Activated CD4-positive, alpha-beta T cell treated with anti-CD3 and anti-CD28 coated beads, Interleukin-2, amount 10 ng/mL, durations not matched to agents 24 days and 14 days (primary cell): ENCODE measurements at regions of chr11 and their contacts with region 1.

Region 1: DNA sequence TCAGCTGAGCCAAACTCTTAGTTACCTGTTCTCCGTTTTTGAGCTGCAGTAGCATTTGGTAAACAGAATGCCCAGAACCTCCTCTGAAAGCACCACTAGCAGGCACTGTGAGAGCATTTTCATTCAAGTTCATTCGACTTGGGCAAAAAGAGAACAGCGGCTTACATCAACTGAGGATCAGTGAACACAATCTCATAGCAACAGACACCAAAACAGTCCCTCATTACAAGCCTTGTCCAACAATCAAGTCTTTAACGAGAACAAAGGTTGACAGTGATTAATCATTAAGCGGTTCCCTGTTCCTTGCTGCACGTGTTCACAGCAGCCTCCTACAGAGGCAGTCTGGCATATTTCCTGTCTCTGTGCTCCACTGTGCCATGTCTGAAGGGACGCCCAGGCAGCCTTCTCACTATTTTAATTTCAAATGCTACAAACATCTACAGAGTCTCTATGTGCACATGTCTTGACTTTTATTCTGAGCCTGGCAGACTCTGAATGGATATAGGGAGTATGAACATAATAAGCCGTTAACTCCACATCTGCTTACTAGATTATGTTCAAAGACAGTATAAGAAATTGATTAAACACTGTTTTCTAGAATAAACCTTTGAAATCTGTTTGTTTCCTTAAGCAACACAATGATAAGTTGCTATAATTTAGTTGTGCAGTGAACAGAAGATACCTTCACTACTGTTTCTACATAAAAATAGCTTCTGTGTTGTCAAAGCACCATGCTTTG is 88.3 kb upstream of the MTMR2 start:
- DNase-seq: peak; percentile 82
- H3K4me3 Mint-ChIP-seq: peak overlapping the region; percentile 52
- H3K27ac Mint-ChIP-seq: peak overlapping the region; percentile 79
- H3K4me1 Mint-ChIP-seq: peaks cover 49% of the 10 kb centered on the region
- H3K27me3 Mint-ChIP-seq: no peaks in the 10 kb centered on the region

Region 2: GRCh38 chr11:95790123-95790932 is 221.9 kb before region 1 on chr11 and contains the start of gene CEP57:
- intact Hi-C with region 1: loop called (anchors 2 kb)
- DNase-seq: peak; percentile 98
- H3K4me3 Mint-ChIP-seq: peak within 1 kb of the TSS; percentile 98
- H3K27ac Mint-ChIP-seq: peak within 1 kb of the TSS; percentile 100
- H3K4me1 Mint-ChIP-seq: peaks cover 45% of the 10 kb centered on the region
- H3K27me3 Mint-ChIP-seq: no peaks in the 10 kb centered on the region
- total RNA-seq, gene CEP57: 75.7 and 87.6 TPM in 2 replicates

Region 3: GRCh38 chr11:96054870-96055705 is 42.8 kb after region 1 on chr11:
- intact Hi-C with region 1: loop called (anchors 2 kb)
- DNase-seq: no peak
- H3K4me3 Mint-ChIP-seq: no peak overlapping the region
- H3K27ac Mint-ChIP-seq: peak overlapping the region; percentile 51
- H3K4me1 Mint-ChIP-seq: peaks cover 35% of the 10 kb centered on the region
- H3K27me3 Mint-ChIP-seq: no peaks in the 10 kb centered on the region

Region 4: GRCh38 chr11:96075532-96075959 is 63.3 kb after region 1 on chr11:
- intact Hi-C with region 1: loop called (anchors 1 kb)
- DNase-seq: no peak
- H3K4me3 Mint-ChIP-seq: peak overlapping the region; percentile 47
- H3K27ac Mint-ChIP-seq: peak overlapping the region; percentile 58
- H3K4me1 Mint-ChIP-seq: peaks cover 51% of the 10 kb centered on the region
- H3K27me3 Mint-ChIP-seq: no peaks in the 10 kb centered on the region

Region 5: DNA sequence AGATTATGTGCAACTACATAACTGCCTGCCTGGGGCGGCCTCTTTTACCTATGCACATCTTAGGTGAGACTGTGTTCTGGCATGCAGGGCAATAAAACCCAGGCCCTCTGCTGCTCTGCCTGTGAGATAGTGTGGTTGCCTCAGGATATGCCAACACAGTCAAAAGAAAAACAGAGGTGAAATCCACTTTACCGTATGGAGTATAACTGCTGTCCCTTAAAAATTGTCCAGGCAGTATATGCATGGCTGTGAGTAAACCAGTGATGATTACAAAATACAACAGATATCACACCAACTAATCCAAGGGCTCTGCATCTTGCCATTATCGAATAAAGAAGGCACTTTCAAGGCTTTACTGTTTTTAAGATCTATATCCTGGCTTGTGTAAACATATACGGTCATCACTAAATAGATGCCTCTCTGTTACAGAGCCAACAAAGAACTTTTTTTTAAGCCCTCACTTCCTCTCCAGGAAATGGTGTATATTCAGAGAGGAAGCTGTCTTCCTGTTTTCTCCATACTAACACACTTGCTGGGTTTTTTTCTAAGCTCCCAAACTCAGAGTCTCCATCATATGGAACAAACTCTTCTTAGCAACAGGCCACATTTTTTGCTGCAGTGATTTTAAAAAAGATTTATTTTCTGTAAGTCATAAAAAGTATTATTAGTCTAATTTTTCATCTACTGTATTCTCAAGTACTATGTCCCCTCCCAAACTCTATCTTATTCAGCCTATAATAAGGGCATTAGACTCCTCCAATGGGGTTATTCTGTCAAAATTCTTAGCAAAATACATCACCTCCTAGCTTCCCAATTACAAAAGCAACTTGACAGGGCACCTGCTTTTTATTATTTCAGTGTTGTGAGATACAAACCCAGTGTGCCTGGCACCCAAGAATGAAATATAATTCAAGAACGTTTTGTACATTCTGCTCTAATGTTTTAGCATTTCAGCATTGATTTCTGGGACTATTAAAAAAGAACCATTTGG is 195.5 kb after region 1 on chr11:
- intact Hi-C with region 1: loop called (anchors 5 kb)
- DNase-seq: peak; percentile 78
- H3K4me3 Mint-ChIP-seq: peak overlapping the region; percentile 74
- H3K27ac Mint-ChIP-seq: peak overlapping the region; percentile 93
- H3K4me1 Mint-ChIP-seq: peaks cover 71% of the 10 kb centered on the region
- H3K27me3 Mint-ChIP-seq: no peaks in the 10 kb centered on the region

Region 6: DNA sequence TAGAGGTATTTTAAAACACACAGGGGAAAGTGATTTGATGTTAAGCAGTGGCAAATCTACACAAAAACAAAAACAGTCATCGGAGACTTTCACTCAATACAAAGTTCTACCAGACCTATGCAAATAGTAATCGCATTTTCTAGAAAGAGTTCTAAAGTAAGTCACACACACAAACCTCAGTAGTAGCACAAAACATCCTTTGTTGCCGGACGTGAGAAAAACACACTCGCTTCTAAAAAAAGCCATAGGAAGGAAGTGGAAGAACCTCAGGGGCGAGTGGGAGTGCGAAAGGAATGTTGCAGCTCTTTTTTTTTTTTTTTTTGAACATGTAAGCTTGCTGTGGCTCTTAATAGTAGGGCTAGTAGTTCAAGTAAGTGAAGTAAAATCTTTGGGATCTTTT is 241.8 kb after region 1 on chr11:
- intact Hi-C with region 1: loop called (anchors 5 kb)
- DNase-seq: peak; percentile 83
- H3K4me3 Mint-ChIP-seq: peak overlapping the region; percentile 79
- H3K27ac Mint-ChIP-seq: peak overlapping the region; percentile 84
- H3K4me1 Mint-ChIP-seq: peaks cover 73% of the 10 kb centered on the region
- H3K27me3 Mint-ChIP-seq: no peaks in the 10 kb centered on the region